GM23248 (cell line): ENCODE measurements at regions of chr22 and their contacts with region 1.

Region 1: DNA sequence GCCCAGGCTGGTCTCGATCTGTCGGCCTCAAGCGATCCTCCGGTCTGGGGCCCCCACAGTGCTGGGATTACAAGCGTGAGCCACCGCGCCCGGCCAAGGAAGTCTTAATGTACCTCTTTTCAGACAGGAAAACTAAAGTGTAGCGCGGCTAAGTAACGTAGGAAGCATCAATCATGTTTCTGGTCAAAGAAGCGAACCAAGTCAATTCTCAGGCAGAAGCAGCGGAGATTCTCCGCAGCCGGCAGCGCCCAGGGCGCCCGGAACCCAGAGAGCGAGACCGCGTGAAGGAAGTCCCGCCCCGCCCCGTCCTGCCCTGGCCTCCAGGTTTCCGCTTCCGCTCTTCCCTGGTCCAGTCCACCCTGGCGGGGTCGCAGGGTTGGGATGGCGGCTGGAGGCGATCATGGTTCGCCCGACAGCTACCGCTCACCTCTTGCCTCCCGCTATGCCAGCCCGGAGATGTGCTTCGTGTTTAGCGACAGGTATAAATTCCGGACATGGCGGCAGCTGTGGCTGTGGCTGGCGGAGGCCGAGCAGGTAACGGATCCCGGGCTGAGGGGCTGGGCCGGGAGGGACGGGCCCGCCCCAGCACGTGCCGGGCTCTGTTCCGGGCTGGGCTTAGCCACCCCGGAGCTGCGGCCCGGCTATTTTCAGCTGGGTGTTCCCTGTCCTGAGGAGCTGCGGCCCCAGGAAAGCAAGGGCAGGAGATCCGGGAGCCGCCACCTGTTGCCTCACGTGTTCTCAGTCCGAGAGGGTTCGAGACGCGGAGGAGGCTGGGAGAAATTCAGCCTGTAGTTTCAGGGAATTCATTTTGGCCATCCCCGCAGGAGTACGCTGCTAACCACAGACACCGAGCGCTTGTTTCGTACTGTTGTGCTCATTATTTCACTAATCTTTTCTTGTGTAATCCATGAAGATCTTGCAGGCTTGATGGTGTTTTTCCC is at the start of gene ADSL:
- DNase-seq: peak; percentile 96
- H3K4me3 ChIP-seq: peak within 1 kb of the TSS; percentile 96
- H3K27ac ChIP-seq: peak within 1 kb of the TSS; percentile 74
- H3K4me1 ChIP-seq: peaks cover 15% of the 10 kb centered on the region; the same call in 1 of the 2 replicates
- H3K27me3 ChIP-seq: no peaks in the 10 kb centered on the region
- total RNA-seq, gene ADSL: 108 and 123 TPM in 2 replicates

Region 2: GRCh38 chr22:39559454-39560105 is 786.9 kb before region 1 on chr22:
- in situ Hi-C with region 1: loop called (anchors 25 kb)
- DNase-seq: peak; percentile 50
- H3K4me3 ChIP-seq: no peak overlapping the region
- H3K27ac ChIP-seq: no peak overlapping the region
- H3K4me1 ChIP-seq: no peaks in the 10 kb centered on the region
- H3K27me3 ChIP-seq: peaks cover 45% of the 10 kb centered on the region

Region 3: DNA sequence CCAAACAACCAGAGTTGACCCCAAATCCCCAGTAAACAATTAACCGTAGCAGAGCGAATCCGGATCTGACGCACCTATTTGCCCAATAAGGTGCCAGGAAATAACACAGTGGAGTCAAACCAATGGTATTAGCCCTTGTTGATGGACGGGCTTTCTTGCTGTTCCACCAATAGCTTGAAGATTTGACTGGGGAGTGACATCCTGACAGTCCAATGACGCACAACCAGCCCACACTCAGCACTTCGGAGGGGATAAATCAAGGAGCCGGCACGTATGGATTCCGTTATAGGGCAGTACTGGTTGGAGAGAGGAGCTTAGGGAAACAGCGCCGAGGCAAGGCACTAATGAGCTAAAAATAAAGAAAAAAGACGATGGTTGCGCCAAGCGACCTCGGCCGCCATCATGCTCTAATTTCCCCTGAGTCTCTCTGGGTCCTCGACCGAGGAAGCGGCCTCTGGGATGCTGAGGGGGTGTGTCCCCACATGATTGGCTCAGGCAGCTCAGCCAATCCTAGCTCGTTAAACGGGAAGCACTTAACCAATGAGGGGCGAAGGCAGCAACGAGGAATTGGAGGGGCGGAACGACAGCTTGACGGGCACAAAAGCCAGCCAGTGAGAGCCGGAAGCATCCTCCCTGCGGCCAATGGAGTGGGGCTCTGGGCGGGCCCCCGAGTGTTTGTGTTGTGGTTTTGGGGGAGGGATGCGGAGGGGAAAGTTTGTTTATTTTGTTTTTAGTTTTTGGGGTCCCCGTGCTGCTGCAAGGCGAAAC is 302.2 kb before region 1 on chr22:
- in situ Hi-C with region 1: loop called (anchors 10 kb)
- DNase-seq: peak; percentile 99
- H3K4me3 ChIP-seq: peak overlapping the region; percentile 88
- H3K27ac ChIP-seq: peak overlapping the region; percentile 86
- H3K4me1 ChIP-seq: peaks cover 20% of the 10 kb centered on the region
- H3K27me3 ChIP-seq: peaks cover 2% of the 10 kb centered on the region; the same call in 1 of the 2 replicates

Region 4: GRCh38 chr22:41038732-41039445 is 692.4 kb after region 1 on chr22:
- in situ Hi-C with region 1: no loop called
- DNase-seq: peak; percentile 7
- H3K4me3 ChIP-seq: no peak overlapping the region
- H3K27ac ChIP-seq: no peak overlapping the region
- H3K4me1 ChIP-seq: no peaks in the 10 kb centered on the region
- H3K27me3 ChIP-seq: no peaks in the 10 kb centered on the region; the same call in 1 of the 2 replicates